ENCODE measurements at regions of chr21 and their contacts with region 1.

Region 1: GRCh38 chr21:33383056-33383888 is 19.9 kb upstream of the IFNGR2 start:
- DNase-seq: peak; percentile 96
- H3K4me3 ChIP-seq: peak overlapping the region; percentile 69
- H3K27ac ChIP-seq: peak overlapping the region; percentile 99
- H3K4me1 ChIP-seq: peaks cover 86% of the 10 kb centered on the region
- CTCF ChIP-seq: no peak; the same call in 1 of the 2 replicates

Region 2: GRCh38 chr21:33308586-33309490 is 74.4 kb before region 1 on chr21:
- CTCF ChIA-PET with region 1: no interaction called
- POLR2A ChIA-PET with region 1: interaction called, 3 read pairs
- intact Hi-C with region 1: loop called (anchors 2 kb)
- DNase-seq: peak; percentile 100
- H3K4me3 ChIP-seq: peak overlapping the region; percentile 42
- H3K27ac ChIP-seq: peak overlapping the region; percentile 99
- H3K4me1 ChIP-seq: peaks cover 100% of the 10 kb centered on the region
- CTCF ChIP-seq: peak; percentile 80

Region 3: DNA sequence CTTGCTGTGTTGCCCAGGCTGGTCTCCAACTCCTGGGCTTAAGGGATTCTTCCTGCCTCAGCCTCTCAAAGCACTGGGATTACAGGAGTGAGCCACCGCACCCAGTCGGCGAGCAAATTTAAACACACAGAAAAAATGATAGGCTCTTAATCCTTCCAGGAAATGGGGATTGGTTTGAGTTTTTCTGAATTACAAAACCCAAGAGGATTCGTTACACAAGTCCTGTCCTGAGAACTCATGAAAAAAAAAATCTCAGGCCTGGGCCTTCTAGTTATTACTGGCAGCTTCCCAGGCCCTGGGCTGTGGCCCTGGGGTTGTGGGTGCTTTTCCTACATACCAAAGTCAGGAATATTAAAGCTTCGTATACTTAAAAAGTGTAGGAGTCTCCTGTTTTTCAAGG is 13.7 kb after region 1 on chr21:
- CTCF ChIA-PET with region 1: no interaction called
- POLR2A ChIA-PET with region 1: interaction called, 13 read pairs
- intact Hi-C with region 1: no loop called
- DNase-seq: no peak
- H3K4me3 ChIP-seq: no peak overlapping the region
- H3K27ac ChIP-seq: no peak overlapping the region
- H3K4me1 ChIP-seq: peaks cover 44% of the 10 kb centered on the region
- CTCF ChIP-seq: no peak

Region 4: GRCh38 chr21:33403779-33404585 is 20.7 kb after region 1 on chr21:
- CTCF ChIA-PET with region 1: interaction called, 4 read pairs
- POLR2A ChIA-PET with region 1: interaction called, 12 read pairs
- intact Hi-C with region 1: loop called (anchors 1 kb)
- DNase-seq: peak; percentile 72
- H3K4me3 ChIP-seq: peak overlapping the region; percentile 84
- H3K27ac ChIP-seq: peak overlapping the region; percentile 80
- H3K4me1 ChIP-seq: peaks cover 54% of the 10 kb centered on the region
- CTCF ChIP-seq: no peak

Region 5: DNA sequence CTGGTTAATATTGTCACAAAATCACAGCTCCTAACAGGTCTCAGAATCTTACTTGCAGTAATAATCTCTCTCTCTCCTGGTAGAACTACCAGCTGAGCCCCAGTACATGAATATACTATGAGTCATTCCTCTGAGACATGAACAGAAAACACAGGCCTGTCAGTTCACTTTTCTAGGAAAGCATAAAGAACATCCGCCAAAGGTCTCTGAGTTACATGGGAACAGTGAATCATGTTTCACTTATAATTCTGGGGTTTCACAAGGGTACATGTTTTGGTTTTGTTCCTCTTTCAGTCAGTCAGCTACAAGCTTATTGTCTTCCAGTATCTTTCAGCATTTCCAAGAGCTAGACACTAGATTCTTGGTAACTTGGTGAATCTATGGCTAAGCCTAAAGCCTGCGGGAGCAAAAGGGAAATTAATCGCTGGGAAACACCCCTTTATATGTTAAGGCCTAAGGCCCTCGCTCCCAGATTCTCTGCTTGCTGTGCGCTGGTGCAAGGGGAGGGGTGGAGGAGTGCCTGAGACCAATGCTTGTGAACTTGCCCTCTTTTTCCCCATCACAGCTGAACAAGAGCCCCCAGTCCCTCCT is 51.6 kb after region 1 on chr21:
- CTCF ChIA-PET with region 1: no interaction called
- POLR2A ChIA-PET with region 1: interaction called, 4 read pairs
- intact Hi-C with region 1: loop called (anchors 2 kb)
- DNase-seq: peak; percentile 60
- H3K4me3 ChIP-seq: no peak overlapping the region
- H3K27ac ChIP-seq: peak overlapping the region; percentile 42
- H3K4me1 ChIP-seq: peaks cover 31% of the 10 kb centered on the region
- CTCF ChIP-seq: no peak